ENCODE measurements at regions of chr5 and their contacts with region 1.

Region 1: GRCh38 chr5:39376293-39376714 is 12.0 kb upstream of the C9 start:
- DNase-seq: no peak
- H3K4me3 ChIP-seq: no peak overlapping the region
- H3K27ac ChIP-seq: no peak overlapping the region
- H3K4me1 ChIP-seq: no peaks in the 10 kb centered on the region
- H3K27me3 ChIP-seq: no peaks in the 10 kb centered on the region
- CTCF ChIP-seq: peak; percentile 39 to 78 (median 70)
- POLR2A ChIP-seq: no peak

Region 2: GRCh38 chr5:38707352-38708210 is 668.7 kb before region 1 on chr5:
- intact Hi-C with region 1: no loop called
- DNase-seq: no peak
- H3K4me3 ChIP-seq: no peak overlapping the region
- H3K27ac ChIP-seq: no peak overlapping the region
- H3K4me1 ChIP-seq: peaks cover 0 to 10% (median 0%) of the 10 kb centered on the region in 6 donors
- H3K27me3 ChIP-seq: no peaks in the 10 kb centered on the region
- CTCF ChIP-seq: no peak
- POLR2A ChIP-seq: no peak

Region 3: GRCh38 chr5:39547553-39548154 is 171.3 kb after region 1 on chr5:
- intact Hi-C with region 1: loop called (anchors 5 kb)
- DNase-seq: no peak
- H3K4me3 ChIP-seq: peak overlapping the region in 1 of 8 donors; percentile 13
- H3K27ac ChIP-seq: no peak overlapping the region
- H3K4me1 ChIP-seq: peaks cover 3 to 32% (median 17%) of the 10 kb centered on the region in 6 donors
- H3K27me3 ChIP-seq: no peaks in the 10 kb centered on the region
- CTCF ChIP-seq: peak in 10 of 11 experiments; percentile 39 to 84 (median 73)
- POLR2A ChIP-seq: no peak